ENCODE measurements at regions of chr2 and their contacts with region 1.

Region 1: GRCh38 chr2:160375802-160376469 is 117.7 kb downstream of the RBMS1 start:
- DNase-seq: no peak
- H3K4me3 ChIP-seq: no peak overlapping the region
- H3K27ac ChIP-seq: no peak overlapping the region
- H3K27me3 ChIP-seq: no peaks in the 10 kb centered on the region
- CTCF ChIP-seq: no peak

Region 2: DNA sequence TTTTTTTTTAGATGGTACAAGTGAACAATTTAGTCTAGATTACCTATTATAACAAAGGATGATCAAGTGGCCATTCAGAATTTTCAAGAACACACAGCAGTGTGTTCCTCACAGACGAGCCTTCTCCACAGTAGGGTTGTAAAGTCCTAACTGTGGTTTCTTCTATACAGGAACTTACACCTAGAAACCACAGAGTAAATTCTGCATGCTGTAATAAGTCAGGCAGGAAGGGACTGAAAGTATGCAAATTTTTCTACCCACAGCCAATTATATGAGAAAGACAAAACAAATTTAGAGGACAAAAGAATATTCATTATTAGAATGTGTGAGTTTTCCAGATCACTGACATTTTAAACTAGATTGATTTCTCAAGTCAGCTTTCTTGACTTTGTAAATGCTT is 18.2 kb after region 1 on chr2:
- CTCF ChIA-PET with region 1: interaction called, 3 read pairs
- POLR2A ChIA-PET with region 1: interaction called, 11 read pairs
- DNase-seq: no peak
- H3K4me3 ChIP-seq: no peak overlapping the region
- H3K27ac ChIP-seq: no peak overlapping the region
- H3K27me3 ChIP-seq: no peaks in the 10 kb centered on the region
- CTCF ChIP-seq: no peak

Region 3: GRCh38 chr2:160406591-160407392 is 30.9 kb after region 1 on chr2:
- CTCF ChIA-PET with region 1: no interaction called
- POLR2A ChIA-PET with region 1: no interaction called
- DNase-seq: no peak
- H3K4me3 ChIP-seq: peak overlapping the region; percentile 76
- H3K27ac ChIP-seq: peak overlapping the region; percentile 63
- H3K27me3 ChIP-seq: no peaks in the 10 kb centered on the region
- CTCF ChIP-seq: no peak